Activated CD4-positive, alpha-beta memory T cell treated with anti-CD3 and anti-CD28 coated beads for 36 hours (primary cell): ENCODE measurements at regions of chr15 and their contacts with region 1.

Region 1: DNA sequence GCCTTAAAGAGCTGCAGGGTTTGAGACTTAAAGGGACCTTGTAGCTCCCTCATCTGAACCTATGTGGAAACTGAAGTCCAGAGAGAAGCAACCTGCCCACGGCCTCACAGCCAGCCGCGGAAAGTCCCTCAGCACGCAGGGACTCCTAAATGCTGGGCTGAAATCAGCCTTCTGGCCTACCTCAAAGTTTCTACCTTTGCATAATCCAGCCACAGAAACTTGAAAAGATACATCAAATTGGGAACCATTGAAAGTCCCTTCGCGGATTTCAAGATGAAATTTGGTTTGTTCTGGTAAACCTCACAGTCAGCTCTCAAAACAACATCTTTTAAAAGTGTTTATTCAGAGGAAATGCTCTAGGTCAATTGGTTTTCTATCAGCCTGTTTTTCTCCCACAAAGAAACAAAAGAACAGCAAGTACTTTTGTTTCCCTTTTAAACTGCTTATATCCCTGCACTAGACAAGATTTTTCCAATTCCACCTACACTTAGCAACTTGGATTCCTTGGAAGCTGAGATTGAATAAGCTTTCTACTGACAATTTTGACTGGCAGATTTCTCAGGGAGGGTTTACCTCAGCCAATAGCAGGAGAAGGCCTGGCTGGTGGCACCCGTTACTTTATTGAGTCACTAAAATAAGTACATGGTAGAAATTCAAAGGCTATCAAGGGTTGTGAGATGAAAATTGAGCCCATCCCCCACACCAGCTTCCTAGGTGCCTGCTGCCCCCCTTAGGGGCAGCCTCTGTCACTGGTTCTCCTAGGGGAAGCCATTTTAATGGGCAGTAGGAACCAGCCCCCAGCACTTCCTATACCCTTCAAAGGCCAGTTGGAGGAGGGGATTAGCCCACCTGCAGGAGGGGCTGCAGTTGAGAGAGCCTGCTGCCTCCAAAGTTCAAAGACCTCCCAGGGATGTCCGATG is 171.2 kb downstream of the ADAMTS17 start:
- DNase-seq: peak; percentile 74
- H3K4me3 Mint-ChIP-seq: no peak overlapping the region
- H3K27ac Mint-ChIP-seq: peak overlapping the region; percentile 83
- H3K4me1 Mint-ChIP-seq: peaks cover 12% of the 10 kb centered on the region
- H3K27me3 Mint-ChIP-seq: peaks cover 2% of the 10 kb centered on the region

Region 2: DNA sequence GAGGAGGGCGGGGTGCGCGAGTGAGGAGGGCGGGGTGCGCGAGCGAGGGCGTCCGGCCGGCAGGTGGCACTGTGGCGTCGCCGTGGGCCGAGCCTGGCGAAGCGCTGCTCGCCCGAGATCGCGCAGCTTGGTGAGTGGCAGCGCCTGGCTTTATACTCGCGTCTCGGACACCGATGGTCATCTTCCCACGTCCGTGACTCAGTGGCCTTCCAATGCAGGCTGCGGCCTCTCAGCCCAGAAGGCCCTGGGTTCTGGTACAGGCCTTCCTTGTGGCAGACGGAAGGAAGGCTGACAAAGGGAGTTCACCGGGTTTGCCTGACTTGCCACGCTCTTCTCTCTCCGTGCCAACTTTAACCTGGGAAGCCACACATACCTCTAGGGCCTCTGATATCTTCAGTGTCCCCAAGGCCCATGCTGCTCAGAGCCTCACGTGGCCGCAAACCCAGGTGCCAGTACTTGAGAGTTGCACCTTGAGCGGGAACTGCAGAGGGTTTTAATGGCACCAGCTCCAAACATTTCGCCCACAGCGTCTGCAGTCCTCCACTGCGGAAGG is 242.0 kb before region 1 on chr15:
- CTCF ChIA-PET with region 1: no interaction called
- POLR2A ChIA-PET with region 1: interaction called, 3 read pairs
- intact Hi-C with region 1: loop called (anchors 5 kb)
- DNase-seq: peak; percentile 87
- H3K4me3 Mint-ChIP-seq: peak overlapping the region; percentile 77
- H3K27ac Mint-ChIP-seq: peak overlapping the region; percentile 42
- H3K4me1 Mint-ChIP-seq: peaks cover 8% of the 10 kb centered on the region
- H3K27me3 Mint-ChIP-seq: no peaks in the 10 kb centered on the region

Region 3: DNA sequence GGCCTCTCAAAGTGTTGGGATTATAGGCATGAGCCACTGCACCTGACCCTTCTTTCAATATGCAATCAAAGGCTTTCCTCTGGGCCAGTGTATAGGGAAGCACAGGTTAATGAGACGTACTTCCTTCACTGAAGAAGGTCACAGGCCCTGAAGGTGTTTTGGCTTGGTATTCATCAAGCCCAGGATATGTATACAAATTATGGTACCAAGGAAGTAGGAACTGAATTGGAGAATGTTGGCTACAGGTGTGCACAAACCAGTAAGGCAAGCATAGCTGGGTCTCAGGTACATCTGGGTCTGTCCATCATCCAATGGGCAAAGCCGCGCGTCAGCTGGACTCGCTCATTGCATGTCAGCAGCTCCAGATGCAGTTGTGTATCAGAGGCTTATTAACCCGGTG is 66.7 kb before region 1 on chr15:
- CTCF ChIA-PET with region 1: no interaction called
- POLR2A ChIA-PET with region 1: no interaction called
- intact Hi-C with region 1: no loop called
- DNase-seq: no peak
- H3K4me3 Mint-ChIP-seq: no peak overlapping the region
- H3K27ac Mint-ChIP-seq: no peak overlapping the region
- H3K4me1 Mint-ChIP-seq: no peaks in the 10 kb centered on the region
- H3K27me3 Mint-ChIP-seq: no peaks in the 10 kb centered on the region

Region 4: GRCh38 chr15:100211855-100212850 is 41.6 kb after region 1 on chr15:
- CTCF ChIA-PET with region 1: no interaction called
- POLR2A ChIA-PET with region 1: no interaction called
- intact Hi-C with region 1: no loop called
- DNase-seq: no peak
- H3K4me3 Mint-ChIP-seq: no peak overlapping the region
- H3K27ac Mint-ChIP-seq: no peak overlapping the region
- H3K4me1 Mint-ChIP-seq: no peaks in the 10 kb centered on the region
- H3K27me3 Mint-ChIP-seq: no peaks in the 10 kb centered on the region